CD8-positive, alpha-beta T cell (primary cell): ENCODE measurements at regions of chr3 and their contacts with region 1.

Region 1: DNA sequence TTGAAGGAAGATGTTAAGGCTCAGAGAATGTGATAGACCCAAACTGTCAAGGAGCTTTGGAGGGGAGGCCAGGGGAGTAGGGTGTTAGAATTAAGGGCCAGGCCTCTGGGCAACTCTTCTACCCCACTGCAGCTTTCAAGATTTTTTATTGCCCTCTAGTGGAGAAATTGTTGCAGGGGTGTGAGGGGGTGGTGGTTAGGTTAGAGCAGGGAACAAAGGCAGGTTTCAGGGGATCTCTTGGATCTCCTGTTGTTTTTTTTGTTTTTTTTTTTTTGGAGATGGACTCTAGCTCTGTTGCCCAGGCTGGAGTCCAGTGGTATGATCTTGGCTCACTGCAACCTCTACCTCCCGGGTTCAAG is 1.4 kb upstream of the SEC13 start:
- DNase-seq: peak in 2 of 9 experiments; percentile 37 to 47
- ATAC-seq: no peak
- H3K4me3 ChIP-seq: no peak overlapping the region
- H3K4me3 Mint-ChIP-seq: peak overlapping the region; percentile 18
- H3K27ac ChIP-seq: no peak overlapping the region
- H3K27ac Mint-ChIP-seq: no peak overlapping the region
- H3K4me1 ChIP-seq: peaks cover 16% of the 10 kb centered on the region
- H3K4me1 Mint-ChIP-seq: peaks cover 29% of the 10 kb centered on the region
- H3K27me3 ChIP-seq: no peaks in the 10 kb centered on the region
- H3K27me3 Mint-ChIP-seq: peaks cover 3% of the 10 kb centered on the region
- CTCF ChIP-seq: peak; percentile 31

Region 2: DNA sequence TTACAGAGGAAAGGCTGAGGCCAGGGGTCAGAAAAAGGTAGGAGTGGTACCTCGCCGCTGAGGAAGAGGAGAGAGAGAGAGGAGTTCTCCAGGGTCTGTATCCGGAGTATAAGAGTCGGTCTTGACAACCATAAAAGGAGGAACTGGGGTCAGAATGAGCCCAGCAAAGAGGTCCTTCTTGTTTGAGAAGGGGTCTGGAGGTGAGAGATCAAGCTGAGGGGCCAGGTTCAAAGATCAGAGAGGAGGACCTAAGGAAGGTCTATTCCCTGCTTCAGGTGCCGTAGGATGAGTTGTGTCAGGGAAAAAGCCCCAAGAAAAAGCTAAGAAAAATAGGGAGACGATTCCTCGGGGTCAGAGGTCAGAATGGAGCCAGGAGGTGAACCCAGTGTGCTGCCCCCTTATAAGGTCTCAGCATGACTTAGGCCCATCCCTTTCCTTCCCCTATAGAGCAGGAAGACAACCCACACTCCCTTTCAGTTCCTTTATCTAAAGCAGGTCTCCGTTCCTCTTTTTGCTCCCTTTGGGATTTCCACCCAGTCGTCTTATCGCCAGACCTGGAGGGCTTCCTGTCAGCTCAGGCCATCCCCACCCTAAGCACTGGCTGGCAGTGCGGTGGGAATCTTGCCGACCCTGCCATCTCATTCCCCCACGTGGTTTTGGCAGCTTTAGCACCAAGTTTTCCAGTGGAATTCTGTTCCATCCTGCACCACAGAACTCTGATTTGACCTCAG is 672.4 kb before region 1 on chr3:
- CTCF ChIA-PET with region 1: no interaction called
- POLR2A ChIA-PET with region 1: interaction called, 4 read pairs
- intact Hi-C with region 1: loop called in 1 of 2 experiments (anchors 5 kb)
- DNase-seq: peak in 2 of 9 experiments; percentile 10 to 42
- ATAC-seq: no peak
- H3K4me3 ChIP-seq: peak overlapping the region; percentile 90 to 91
- H3K4me3 Mint-ChIP-seq: peak overlapping the region; percentile 93
- H3K27ac ChIP-seq: peak overlapping the region; percentile 88 to 94
- H3K27ac Mint-ChIP-seq: peak overlapping the region; percentile 97
- H3K4me1 ChIP-seq: peaks cover 27% of the 10 kb centered on the region
- H3K4me1 Mint-ChIP-seq: peaks cover 39% of the 10 kb centered on the region
- H3K27me3 ChIP-seq: no peaks in the 10 kb centered on the region
- H3K27me3 Mint-ChIP-seq: no peaks in the 10 kb centered on the region
- CTCF ChIP-seq: no peak

Region 3: GRCh38 chr3:9792405-9793160 is 529.7 kb before region 1 on chr3 and contains the starts of genes ARPC4 and TADA3:
- CTCF ChIA-PET with region 1: no interaction called
- POLR2A ChIA-PET with region 1: interaction called, 5 read pairs
- intact Hi-C with region 1: loop called (anchors 2 kb)
- DNase-seq: peak; percentile 82 to 97 (median 92)
- ATAC-seq: peak; percentile 83
- H3K4me3 ChIP-seq: peak within 1 kb of the TSS; percentile 76 to 96
- H3K4me3 Mint-ChIP-seq: peak within 1 kb of the TSS; percentile 94
- H3K27ac ChIP-seq: peak within 1 kb of the TSS; percentile 93 to 98
- H3K27ac Mint-ChIP-seq: peak within 1 kb of the TSS; percentile 98
- H3K4me1 ChIP-seq: peaks cover 48% of the 10 kb centered on the region
- H3K4me1 Mint-ChIP-seq: peaks cover 58% of the 10 kb centered on the region
- H3K27me3 ChIP-seq: no peaks in the 10 kb centered on the region
- H3K27me3 Mint-ChIP-seq: no peaks in the 10 kb centered on the region
- CTCF ChIP-seq: no peak
- total RNA-seq, gene ARPC4: 97.7 to 104 TPM
- total RNA-seq, gene TADA3: 9.5 to 11.0 TPM

Region 4: GRCh38 chr3:9890249-9891071 is 431.9 kb before region 1 on chr3 and contains the start of gene JAGN1:
- CTCF ChIA-PET with region 1: no interaction called
- POLR2A ChIA-PET with region 1: no interaction called
- intact Hi-C with region 1: loop called (anchors 1 kb)
- DNase-seq: peak; percentile 86 to 94 (median 91)
- ATAC-seq: peak; percentile 92
- H3K4me3 ChIP-seq: peak within 1 kb of the TSS; percentile 95 to 96
- H3K4me3 Mint-ChIP-seq: peak within 1 kb of the TSS; percentile 98
- H3K27ac ChIP-seq: peak within 1 kb of the TSS; percentile 99 to 100
- H3K27ac Mint-ChIP-seq: peak within 1 kb of the TSS; percentile 100
- H3K4me1 ChIP-seq: peaks cover 16% of the 10 kb centered on the region
- H3K4me1 Mint-ChIP-seq: peaks cover 40% of the 10 kb centered on the region
- H3K27me3 ChIP-seq: no peaks in the 10 kb centered on the region
- H3K27me3 Mint-ChIP-seq: no peaks in the 10 kb centered on the region
- CTCF ChIP-seq: no peak
- total RNA-seq, gene JAGN1: 13.4 to 14.5 TPM

Region 5: GRCh38 chr3:10026084-10026890 is 296.0 kb before region 1 on chr3 and contains the start of gene FANCD2:
- CTCF ChIA-PET with region 1: no interaction called
- POLR2A ChIA-PET with region 1: no interaction called
- intact Hi-C with region 1: loop called in 1 of 2 experiments (anchors 5 kb)
- DNase-seq: peak; percentile 87 to 97 (median 93)
- ATAC-seq: peak; percentile 92
- H3K4me3 ChIP-seq: peak within 1 kb of the TSS; percentile 76 to 82
- H3K4me3 Mint-ChIP-seq: peak within 1 kb of the TSS; percentile 98
- H3K27ac ChIP-seq: peak within 1 kb of the TSS; percentile 84
- H3K27ac Mint-ChIP-seq: peak within 1 kb of the TSS; percentile 96
- H3K4me1 ChIP-seq: peaks cover 18% of the 10 kb centered on the region
- H3K4me1 Mint-ChIP-seq: peaks cover 27% of the 10 kb centered on the region
- H3K27me3 ChIP-seq: no peaks in the 10 kb centered on the region
- H3K27me3 Mint-ChIP-seq: no peaks in the 10 kb centered on the region
- CTCF ChIP-seq: no peak
- total RNA-seq, gene FANCD2: 15.8 to 17.7 TPM

Region 6: GRCh38 chr3:11271986-11272904 is 949.9 kb after region 1 on chr3 and contains the start of gene ATG7:
- CTCF ChIA-PET with region 1: no interaction called
- POLR2A ChIA-PET with region 1: no interaction called
- intact Hi-C with region 1: loop called (anchors 2 to 5 kb)
- DNase-seq: peak; percentile 94 to 98 (median 97)
- ATAC-seq: peak; percentile 98
- H3K4me3 ChIP-seq: peak within 1 kb of the TSS; percentile 77 to 96
- H3K4me3 Mint-ChIP-seq: peak within 1 kb of the TSS; percentile 96
- H3K27ac ChIP-seq: peak within 1 kb of the TSS; percentile 94 to 97
- H3K27ac Mint-ChIP-seq: peak within 1 kb of the TSS; percentile 99
- H3K4me1 ChIP-seq: peaks cover 23% of the 10 kb centered on the region
- H3K4me1 Mint-ChIP-seq: peaks cover 52% of the 10 kb centered on the region
- H3K27me3 ChIP-seq: no peaks in the 10 kb centered on the region
- H3K27me3 Mint-ChIP-seq: no peaks in the 10 kb centered on the region
- CTCF ChIP-seq: no peak
- total RNA-seq, gene ATG7: 21.3 to 23.8 TPM